A673 (cell line): ENCODE measurements at regions of chr6 and their contacts with region 1.

Region 1: GRCh38 chr6:112087136-112087911 is at the starts of genes FAM229B and TUBE1:
- DNase-seq: peak; percentile 98
- H3K4me3 ChIP-seq: peak within 1 kb of the TSS; percentile 67
- H3K27ac ChIP-seq: peak within 1 kb of the TSS; percentile 74
- H3K4me1 ChIP-seq: peaks cover 13% of the 10 kb centered on the region
- H3K27me3 ChIP-seq: peaks cover 9% of the 10 kb centered on the region
- CTCF ChIP-seq: no peak
- total RNA-seq, gene FAM229B: 10.5 and 11.6 TPM in 2 replicates
- total RNA-seq, gene TUBE1: 24.4 and 29.4 TPM in 2 replicates

Region 2: DNA sequence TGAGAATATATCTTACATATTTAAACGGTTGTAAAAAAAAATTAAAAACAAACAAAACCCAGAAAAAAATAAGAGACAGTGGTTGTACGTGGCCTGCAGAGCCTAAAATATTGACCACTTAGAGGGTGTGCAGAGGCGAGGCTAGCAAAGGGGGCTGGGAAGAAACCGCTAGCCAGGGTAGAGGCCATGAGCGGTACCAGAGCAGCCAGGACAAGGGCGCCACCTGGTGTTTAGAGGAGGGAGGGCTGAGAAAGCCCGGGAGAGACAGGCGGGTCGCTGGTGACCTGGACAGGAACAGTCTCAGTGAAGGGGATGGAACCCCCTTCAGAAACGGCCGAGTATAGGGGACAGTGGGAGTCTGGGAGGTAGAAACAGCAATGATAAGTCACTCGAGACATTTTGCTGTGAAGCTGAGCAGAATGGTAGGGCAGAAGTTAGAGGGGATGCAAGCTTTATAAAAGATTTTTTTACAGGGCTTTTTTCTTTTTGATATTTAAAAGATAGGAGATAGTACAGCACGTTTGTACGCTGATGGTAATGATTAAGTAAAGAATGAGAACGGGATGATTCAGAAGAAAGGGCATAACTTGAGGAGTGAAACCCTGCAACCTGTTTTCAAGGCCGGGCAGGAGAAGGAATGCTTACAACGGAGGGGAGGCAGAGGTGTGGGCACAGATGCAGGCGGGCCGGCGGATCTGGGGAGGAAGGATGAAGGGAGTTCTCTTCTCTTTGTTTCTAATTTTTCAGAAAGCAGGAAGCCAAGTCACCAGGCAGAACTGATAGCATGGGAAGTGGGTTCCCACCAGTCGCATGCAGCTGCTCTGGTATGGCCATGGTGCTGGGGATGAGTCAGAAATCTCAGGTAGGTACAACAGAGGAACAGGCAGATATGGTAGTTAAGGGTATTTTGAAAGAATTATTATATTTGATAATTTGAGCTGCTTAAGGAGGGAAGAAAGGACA is 76.3 kb after region 1 on chr6:
- CTCF ChIA-PET with region 1: interaction called, 14 read pairs
- POLR2A ChIA-PET with region 1: no interaction called
- intact Hi-C with region 1: loop called (anchors 2 kb)
- DNase-seq: peak; percentile 69
- H3K4me3 ChIP-seq: no peak overlapping the region
- H3K27ac ChIP-seq: no peak overlapping the region
- H3K4me1 ChIP-seq: no peaks in the 10 kb centered on the region
- H3K27me3 ChIP-seq: peaks cover 23% of the 10 kb centered on the region
- CTCF ChIP-seq: peak; percentile 95

Region 3: DNA sequence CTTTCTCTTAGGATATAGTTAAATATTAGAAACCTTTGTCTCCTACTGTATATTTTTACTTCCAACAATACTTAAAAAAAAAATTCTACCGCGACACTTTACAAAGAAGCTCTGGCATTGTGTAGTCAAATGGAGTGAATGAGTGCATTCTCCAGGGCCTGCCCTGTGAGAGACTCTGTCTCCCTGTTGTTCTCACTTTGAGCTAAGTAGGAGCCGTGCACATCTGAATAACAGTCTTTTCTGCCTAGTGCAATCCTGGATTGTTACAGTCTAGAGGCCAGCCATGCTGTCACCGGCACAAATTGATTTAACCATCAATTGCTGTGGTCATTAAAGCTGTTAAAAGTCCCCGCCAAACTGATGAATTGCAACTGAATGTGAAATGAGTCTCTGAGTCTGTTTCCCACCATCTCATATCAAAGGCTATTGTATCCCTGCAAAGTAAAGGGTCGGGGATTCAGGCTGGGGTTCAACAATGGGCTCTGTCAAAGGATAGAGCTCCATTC is 415.8 kb after region 1 on chr6:
- CTCF ChIA-PET with region 1: no interaction called
- POLR2A ChIA-PET with region 1: no interaction called
- intact Hi-C with region 1: no loop called
- DNase-seq: peak; percentile 38
- H3K4me3 ChIP-seq: no peak overlapping the region
- H3K27ac ChIP-seq: no peak overlapping the region
- H3K4me1 ChIP-seq: peaks cover 21% of the 10 kb centered on the region
- H3K27me3 ChIP-seq: no peaks in the 10 kb centered on the region
- CTCF ChIP-seq: no peak